Activated B cell treated with CpG ODN at 0.5 μM for 24 hours (primary cell): ENCODE measurements at regions of chr1 and their contacts with region 1.

Region 1: DNA sequence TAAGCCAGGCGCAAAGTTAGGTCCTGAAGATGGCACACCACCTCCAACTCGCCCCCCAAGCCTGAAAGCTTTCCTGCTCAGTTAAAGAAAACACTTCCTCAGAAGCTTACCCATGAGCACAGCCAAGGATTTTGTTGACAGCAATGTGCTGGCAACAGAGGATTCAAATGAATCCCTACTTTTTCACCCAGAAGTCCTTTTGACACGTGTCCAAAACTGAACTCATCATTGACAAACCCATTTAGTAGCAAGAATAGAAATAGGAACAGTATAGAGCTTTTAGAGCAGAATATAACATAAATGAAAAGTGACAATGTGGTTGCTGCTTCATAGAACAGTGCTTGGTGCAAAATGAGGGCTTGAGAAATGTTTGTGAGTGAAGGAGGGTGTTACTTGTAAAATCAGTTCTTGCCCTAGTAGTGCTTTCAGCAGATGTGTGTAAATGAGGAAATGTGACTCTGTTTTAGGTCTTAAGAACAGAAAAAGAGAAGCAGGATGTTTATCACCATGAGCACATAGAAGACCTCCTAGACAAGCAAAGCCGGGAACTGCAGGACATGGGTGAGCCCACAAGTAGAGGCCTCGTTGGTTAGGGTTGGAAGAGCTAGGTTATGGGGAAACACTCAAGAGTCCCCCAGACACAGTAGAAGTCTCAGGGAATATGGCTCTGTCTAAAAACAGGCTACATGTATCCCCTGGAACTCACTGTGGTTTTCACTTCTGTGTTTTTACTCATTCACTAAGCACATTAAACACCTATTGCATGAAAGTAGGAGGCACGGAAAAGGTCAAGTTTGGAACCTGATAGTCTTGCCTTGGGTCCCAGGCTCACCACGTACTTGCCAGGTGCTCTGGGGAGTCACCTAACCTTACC is 48.6 kb upstream of the TMEM125 start:
- DNase-seq: peak; percentile 30
- ATAC-seq: peak; percentile 86
- H3K4me3 Mint-ChIP-seq: peak overlapping the region; percentile 29
- H3K27ac Mint-ChIP-seq: peak overlapping the region; percentile 91
- H3K4me1 Mint-ChIP-seq: peaks cover 33% of the 10 kb centered on the region
- H3K27me3 Mint-ChIP-seq: no peaks in the 10 kb centered on the region
- CTCF ChIP-seq: no peak

Region 2: DNA sequence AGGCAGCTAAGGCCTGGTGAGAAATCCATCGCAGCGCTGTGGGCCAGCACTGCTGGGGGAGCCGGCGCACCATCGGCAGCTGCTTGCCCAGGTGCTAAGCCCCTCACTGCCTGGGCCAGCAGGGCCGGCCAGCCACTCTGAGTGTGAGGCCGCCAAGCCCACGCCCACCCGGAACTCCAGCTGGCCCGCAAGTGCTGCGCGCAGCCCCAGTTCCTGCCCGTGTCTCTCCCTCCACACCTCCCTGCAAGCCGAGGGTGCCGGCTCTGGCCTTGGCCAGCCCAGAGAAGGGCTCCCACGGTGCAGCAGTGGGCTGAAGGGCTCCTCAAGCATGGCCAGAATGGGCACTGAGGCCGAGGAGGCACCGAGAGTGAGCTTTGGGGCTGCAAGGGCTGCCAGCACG is 113.5 kb before region 1 on chr1:
- CTCF ChIA-PET with region 1: no interaction called
- POLR2A ChIA-PET with region 1: no interaction called
- intact Hi-C with region 1: no loop called
- DNase-seq: no peak
- ATAC-seq: no peak
- H3K4me3 Mint-ChIP-seq: no peak overlapping the region
- H3K27ac Mint-ChIP-seq: no peak overlapping the region
- H3K4me1 Mint-ChIP-seq: no peaks in the 10 kb centered on the region
- H3K27me3 Mint-ChIP-seq: peaks cover 4% of the 10 kb centered on the region
- CTCF ChIP-seq: no peak

Region 3: GRCh38 chr1:43414634-43415223 is 193.6 kb after region 1 on chr1:
- CTCF ChIA-PET with region 1: interaction called, 147 read pairs
- POLR2A ChIA-PET with region 1: interaction called, 14 read pairs
- intact Hi-C with region 1: no loop called
- DNase-seq: peak; percentile 31
- ATAC-seq: peak; percentile 96
- H3K4me3 Mint-ChIP-seq: no peak overlapping the region
- H3K27ac Mint-ChIP-seq: no peak overlapping the region
- H3K4me1 Mint-ChIP-seq: no peaks in the 10 kb centered on the region
- H3K27me3 Mint-ChIP-seq: no peaks in the 10 kb centered on the region
- CTCF ChIP-seq: peak; percentile 19